ENCODE measurements at regions of chr3 and their contacts with region 1.

Region 1: GRCh38 chr3:54853573-54854404 is 74.1 kb downstream of the LRTM1 start:
- DNase-seq: peak; percentile 61
- H3K4me3 Mint-ChIP-seq: no peak overlapping the region
- H3K27ac Mint-ChIP-seq: peak overlapping the region; percentile 75
- H3K4me1 Mint-ChIP-seq: peaks cover 23% of the 10 kb centered on the region
- H3K27me3 Mint-ChIP-seq: peaks cover 16% of the 10 kb centered on the region
- CTCF ChIP-seq: peak; percentile 79

Region 2: GRCh38 chr3:54427941-54428871 is 425.6 kb before region 1 on chr3:
- CTCF ChIA-PET with region 1: interaction called, 8 read pairs
- POLR2A ChIA-PET with region 1: interaction called, 3 read pairs
- intact Hi-C with region 1: loop called (anchors 2 kb)
- DNase-seq: peak; percentile 62
- H3K4me3 Mint-ChIP-seq: no peak overlapping the region
- H3K27ac Mint-ChIP-seq: no peak overlapping the region
- H3K4me1 Mint-ChIP-seq: no peaks in the 10 kb centered on the region
- H3K27me3 Mint-ChIP-seq: peaks cover 12% of the 10 kb centered on the region
- CTCF ChIP-seq: peak; percentile 78

Region 3: DNA sequence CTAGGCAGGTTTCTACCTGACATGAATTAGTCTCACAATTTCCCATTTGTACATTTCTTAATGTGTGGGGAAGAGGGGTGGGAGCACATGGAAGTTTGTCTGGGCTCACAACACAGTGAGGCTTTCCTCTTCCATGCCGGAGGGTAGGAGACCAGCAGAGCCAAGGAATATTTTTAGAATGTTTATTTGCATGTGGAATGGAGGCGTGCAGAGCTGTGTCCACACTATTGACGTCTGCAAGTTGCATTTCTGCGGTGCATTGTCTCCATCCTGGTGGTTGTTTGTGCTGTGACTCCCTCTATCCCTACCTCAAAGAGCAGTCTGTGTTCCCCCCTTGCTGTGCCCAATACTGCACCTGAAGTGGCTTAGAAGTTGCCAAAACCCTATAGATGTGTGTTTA is 177.1 kb after region 1 on chr3:
- CTCF ChIA-PET with region 1: interaction called, 3 read pairs
- POLR2A ChIA-PET with region 1: no interaction called
- intact Hi-C with region 1: loop called (anchors 10 kb)
- DNase-seq: no peak
- H3K4me3 Mint-ChIP-seq: no peak overlapping the region
- H3K27ac Mint-ChIP-seq: no peak overlapping the region
- H3K4me1 Mint-ChIP-seq: no peaks in the 10 kb centered on the region
- H3K27me3 Mint-ChIP-seq: no peaks in the 10 kb centered on the region
- CTCF ChIP-seq: no peak

Measured in MCF 10A (cell line).